ENCODE measurements at regions of chr19 and their contacts with region 1.

Region 1: GRCh38 chr19:12757544-12758274 is 6.1 kb downstream of the BEST2 start:
- DNase-seq: peak; percentile 80
- H3K4me3 ChIP-seq: peak overlapping the region in 3 of 4 donors; percentile 10 to 53 (median 26)
- H3K27ac ChIP-seq: peak overlapping the region; percentile 26 to 60 (median 45)
- H3K4me1 ChIP-seq: peaks cover 8 to 12% (median 11%) of the 10 kb centered on the region in 4 donors
- H3K27me3 ChIP-seq: peaks cover 4% of the 10 kb centered on the region
- CTCF ChIP-seq: peak; percentile 88 to 97 (median 92)
- EP300 ChIP-seq: no peak
- POLR2A ChIP-seq: peak; percentile 16

Region 2: GRCh38 chr19:12847159-12848139 is 89.7 kb after region 1 on chr19:
- in situ Hi-C with region 1: loop called (anchors 5 to 10 kb)
- intact Hi-C with region 1: no loop called
- DNase-seq: peak; percentile 88
- H3K4me3 ChIP-seq: peak overlapping the region in 1 of 4 donors; percentile 28
- H3K27ac ChIP-seq: no peak overlapping the region
- H3K4me1 ChIP-seq: peaks cover 0 to 10% (median 9%) of the 10 kb centered on the region in 4 donors
- H3K27me3 ChIP-seq: peaks cover 60% of the 10 kb centered on the region
- CTCF ChIP-seq: peak; percentile 94 to 100 (median 99)
- EP300 ChIP-seq: no peak
- POLR2A ChIP-seq: no peak

Measured in transverse colon (tissue), 4 donors.